ENCODE measurements at regions of chr21 and their contacts with region 1.

Region 1: DNA sequence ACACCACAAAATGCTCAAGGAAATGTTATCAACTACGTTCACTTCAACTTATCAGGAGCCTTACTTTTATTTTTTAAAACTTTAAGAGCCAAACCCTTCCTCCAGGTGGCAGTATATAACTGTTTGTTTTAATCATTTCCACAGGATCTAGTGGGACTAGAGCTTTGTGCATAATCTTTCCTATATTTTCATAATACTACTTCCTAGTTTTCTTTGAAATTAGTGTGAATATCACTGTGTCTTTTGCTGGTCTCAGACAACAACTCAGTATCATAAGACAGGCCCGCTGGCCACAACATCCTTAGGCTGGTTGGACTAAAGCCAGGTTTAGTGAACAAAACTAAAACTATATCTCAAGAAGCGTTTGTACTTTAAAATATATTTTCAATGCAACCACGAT is 145.5 kb downstream of the TIAM1 start:
- DNase-seq: peak; percentile 62
- ATAC-seq: peak; percentile 64
- H3K4me3 ChIP-seq: no peak overlapping the region
- H3K27ac ChIP-seq: no peak overlapping the region
- H3K4me1 ChIP-seq: peaks cover 2% of the 10 kb centered on the region; the same call in 1 of the 2 replicates
- H3K27me3 ChIP-seq: no peaks in the 10 kb centered on the region
- CTCF ChIP-seq: peak; percentile 77
- POLR2A ChIP-seq: no peak
- RAD21 ChIP-seq: peak; percentile 76

Region 2: GRCh38 chr21:31347435-31348032 is 149.0 kb after region 1 on chr21:
- CTCF ChIA-PET with region 1: interaction called, 3 read pairs
- POLR2A ChIA-PET with region 1: no interaction called
- dilution Hi-C with region 1: no loop called
- in situ Hi-C with region 1: no loop called
- intact Hi-C with region 1: loop called (anchors 2 kb)
- DNase-seq: peak; percentile 50
- ATAC-seq: peak; percentile 43; the same call in 1 of the 2 replicates
- H3K4me3 ChIP-seq: no peak overlapping the region
- H3K27ac ChIP-seq: no peak overlapping the region
- H3K4me1 ChIP-seq: no peaks in the 10 kb centered on the region
- H3K27me3 ChIP-seq: peaks cover 31% of the 10 kb centered on the region
- CTCF ChIP-seq: peak; percentile 51
- POLR2A ChIP-seq: no peak
- RAD21 ChIP-seq: peak; percentile 45

Region 3: DNA sequence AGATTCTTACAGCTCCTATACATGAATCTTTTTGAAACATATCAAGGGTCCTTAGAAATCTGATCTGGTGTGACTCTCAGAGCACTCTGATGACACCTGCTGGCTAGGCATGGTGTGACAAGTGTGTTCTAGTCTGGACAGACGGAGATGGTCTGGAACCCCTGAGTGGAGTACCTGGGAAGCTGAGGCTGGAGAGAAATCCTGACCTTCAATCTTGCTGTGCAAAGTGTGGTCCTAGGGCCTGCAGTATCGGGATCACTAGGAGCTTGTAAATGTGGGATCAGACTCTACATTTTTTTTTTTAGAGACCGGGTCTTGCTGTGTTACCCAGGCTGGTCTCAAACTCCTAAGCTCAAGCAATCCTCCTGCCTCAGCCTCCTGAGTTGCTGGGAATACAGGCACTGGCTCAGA is 382.3 kb after region 1 on chr21:
- CTCF ChIA-PET with region 1: interaction called, 10 read pairs
- POLR2A ChIA-PET with region 1: no interaction called
- dilution Hi-C with region 1: no loop called
- in situ Hi-C with region 1: loop called (anchors 5 kb)
- intact Hi-C with region 1: loop called (anchors 1 kb)
- DNase-seq: peak; percentile 61
- ATAC-seq: peak; percentile 100
- H3K4me3 ChIP-seq: no peak overlapping the region
- H3K27ac ChIP-seq: no peak overlapping the region
- H3K4me1 ChIP-seq: no peaks in the 10 kb centered on the region
- H3K27me3 ChIP-seq: peaks cover 2% of the 10 kb centered on the region
- CTCF ChIP-seq: peak; percentile 84
- POLR2A ChIP-seq: no peak
- RAD21 ChIP-seq: peak; percentile 84

Region 4: DNA sequence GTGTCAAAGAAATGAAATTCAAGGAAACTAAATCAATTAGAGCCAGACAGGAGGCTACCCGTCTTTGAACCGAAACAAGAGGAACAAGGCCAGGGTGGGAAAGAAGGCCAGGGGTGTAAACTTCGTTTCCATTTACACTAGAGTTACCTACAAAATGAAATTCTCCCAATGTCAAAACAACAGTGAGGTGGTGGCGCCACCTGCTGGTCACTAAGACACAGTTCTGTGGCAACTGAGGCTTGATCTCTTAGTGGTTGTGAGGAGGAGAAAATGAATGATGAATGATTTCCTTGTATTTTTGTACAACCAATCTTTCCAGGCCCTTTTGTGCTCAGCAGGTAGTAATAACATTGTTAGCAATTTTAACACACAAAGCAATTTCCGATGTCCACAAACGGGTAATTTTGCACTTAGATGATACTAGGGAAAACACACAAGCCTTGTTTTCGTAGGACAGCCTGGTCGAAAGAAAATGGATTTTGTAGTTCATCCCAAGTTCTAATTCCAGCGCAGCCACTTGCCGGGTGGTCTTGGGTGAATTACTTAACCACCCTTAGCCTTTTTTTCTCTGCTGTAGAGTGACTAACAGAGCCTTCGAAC is 406.1 kb after region 1 on chr21:
- CTCF ChIA-PET with region 1: interaction called, 5 read pairs
- POLR2A ChIA-PET with region 1: no interaction called
- dilution Hi-C with region 1: no loop called
- in situ Hi-C with region 1: no loop called
- intact Hi-C with region 1: loop called (anchors 1 kb)
- DNase-seq: peak; percentile 54
- ATAC-seq: peak; percentile 86
- H3K4me3 ChIP-seq: no peak overlapping the region
- H3K27ac ChIP-seq: no peak overlapping the region
- H3K4me1 ChIP-seq: no peaks in the 10 kb centered on the region
- H3K27me3 ChIP-seq: no peaks in the 10 kb centered on the region; the same call in 1 of the 2 replicates
- CTCF ChIP-seq: peak; percentile 80
- POLR2A ChIP-seq: no peak
- RAD21 ChIP-seq: peak; percentile 87